MCF 10A (cell line): ENCODE measurements at regions of chr6 and their contacts with region 1.

Region 1: GRCh38 chr6:133568970-133569889 is 319.7 kb upstream of the TCF21 start:
- DNase-seq: peak; percentile 97
- H3K4me3 Mint-ChIP-seq: peak overlapping the region; percentile 71
- H3K27ac Mint-ChIP-seq: peak overlapping the region; percentile 93
- H3K4me1 Mint-ChIP-seq: peaks cover 16% of the 10 kb centered on the region
- H3K27me3 Mint-ChIP-seq: no peaks in the 10 kb centered on the region
- CTCF ChIP-seq: peak; percentile 85

Region 2: GRCh38 chr6:133352046-133352445 is 217.2 kb before region 1 on chr6:
- CTCF ChIA-PET with region 1: no interaction called
- POLR2A ChIA-PET with region 1: no interaction called
- intact Hi-C with region 1: no loop called
- DNase-seq: no peak
- H3K4me3 Mint-ChIP-seq: no peak overlapping the region
- H3K27ac Mint-ChIP-seq: no peak overlapping the region
- H3K4me1 Mint-ChIP-seq: no peaks in the 10 kb centered on the region
- H3K27me3 Mint-ChIP-seq: peaks cover 93% of the 10 kb centered on the region
- CTCF ChIP-seq: no peak

Region 3: DNA sequence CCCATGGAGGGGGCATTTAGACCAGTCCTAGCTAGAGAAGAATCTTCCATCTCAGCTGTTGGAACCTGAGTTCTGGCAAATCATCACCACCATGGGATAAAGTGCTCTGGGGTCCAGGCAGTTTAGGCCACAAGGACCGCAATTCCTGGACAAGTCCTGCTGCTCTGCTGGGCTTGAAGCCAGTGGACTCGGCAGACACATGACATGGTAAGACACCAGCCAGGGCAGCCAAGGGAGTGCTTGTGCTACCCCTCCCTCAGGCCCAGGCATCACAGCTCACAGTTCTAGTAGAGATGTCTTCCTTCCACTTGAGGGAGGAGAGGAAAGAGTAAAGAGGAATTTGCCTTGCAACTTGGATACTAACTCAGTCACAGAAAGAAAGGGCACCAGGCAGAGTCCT is 82.1 kb before region 1 on chr6:
- CTCF ChIA-PET with region 1: no interaction called
- POLR2A ChIA-PET with region 1: no interaction called
- intact Hi-C with region 1: no loop called
- DNase-seq: no peak
- H3K4me3 Mint-ChIP-seq: no peak overlapping the region
- H3K27ac Mint-ChIP-seq: no peak overlapping the region
- H3K4me1 Mint-ChIP-seq: no peaks in the 10 kb centered on the region
- H3K27me3 Mint-ChIP-seq: peaks cover 86% of the 10 kb centered on the region
- CTCF ChIP-seq: no peak

Region 4: DNA sequence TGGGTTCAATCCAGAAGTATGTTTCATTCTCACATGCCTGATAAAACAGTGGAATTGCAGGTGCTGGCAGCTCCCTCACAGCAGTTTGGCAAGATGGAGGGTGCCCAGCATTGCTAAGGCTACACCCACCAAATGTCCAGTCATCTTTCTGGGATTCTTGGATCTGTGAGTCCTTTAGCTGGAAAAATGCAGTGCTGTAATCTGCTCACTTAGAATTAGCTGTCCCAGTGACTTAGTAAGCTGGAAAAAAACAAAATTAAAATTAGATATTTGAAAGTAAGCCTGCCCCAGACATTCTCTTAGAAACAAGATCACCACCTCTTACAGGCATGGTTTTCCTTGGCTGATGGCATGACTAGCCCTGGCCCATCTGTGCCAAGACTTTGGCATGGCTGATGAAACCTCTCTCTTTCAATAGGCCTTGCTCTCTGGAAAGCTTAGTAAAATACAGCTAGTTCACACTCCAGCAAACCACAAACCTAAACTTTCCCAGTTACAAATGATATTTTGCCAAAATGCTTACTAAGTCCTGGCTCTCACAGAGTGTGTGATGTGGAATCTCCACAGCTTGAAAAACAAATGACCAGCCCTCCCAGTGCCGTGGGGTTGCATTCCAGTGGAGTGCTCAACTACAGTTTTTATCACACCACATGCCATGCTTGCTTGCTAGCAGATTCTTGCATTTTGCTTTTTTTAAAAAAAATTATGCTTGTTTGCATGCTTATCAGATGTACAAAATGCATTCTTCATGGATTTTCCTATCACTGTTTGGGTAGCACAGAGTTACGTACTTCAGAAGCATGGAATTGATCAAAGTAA is 66.6 kb before region 1 on chr6:
- CTCF ChIA-PET with region 1: no interaction called
- POLR2A ChIA-PET with region 1: no interaction called
- intact Hi-C with region 1: no loop called
- DNase-seq: no peak
- H3K4me3 Mint-ChIP-seq: no peak overlapping the region
- H3K27ac Mint-ChIP-seq: no peak overlapping the region
- H3K4me1 Mint-ChIP-seq: no peaks in the 10 kb centered on the region
- H3K27me3 Mint-ChIP-seq: peaks cover 91% of the 10 kb centered on the region
- CTCF ChIP-seq: no peak

Region 5: GRCh38 chr6:133609404-133610270 is 40.4 kb after region 1 on chr6:
- CTCF ChIA-PET with region 1: interaction called, 7 read pairs
- POLR2A ChIA-PET with region 1: interaction called, 3 read pairs
- intact Hi-C with region 1: loop called (anchors 1 kb)
- DNase-seq: peak; percentile 100
- H3K4me3 Mint-ChIP-seq: no peak overlapping the region
- H3K27ac Mint-ChIP-seq: no peak overlapping the region
- H3K4me1 Mint-ChIP-seq: no peaks in the 10 kb centered on the region
- H3K27me3 Mint-ChIP-seq: no peaks in the 10 kb centered on the region
- CTCF ChIP-seq: no peak

Region 6: DNA sequence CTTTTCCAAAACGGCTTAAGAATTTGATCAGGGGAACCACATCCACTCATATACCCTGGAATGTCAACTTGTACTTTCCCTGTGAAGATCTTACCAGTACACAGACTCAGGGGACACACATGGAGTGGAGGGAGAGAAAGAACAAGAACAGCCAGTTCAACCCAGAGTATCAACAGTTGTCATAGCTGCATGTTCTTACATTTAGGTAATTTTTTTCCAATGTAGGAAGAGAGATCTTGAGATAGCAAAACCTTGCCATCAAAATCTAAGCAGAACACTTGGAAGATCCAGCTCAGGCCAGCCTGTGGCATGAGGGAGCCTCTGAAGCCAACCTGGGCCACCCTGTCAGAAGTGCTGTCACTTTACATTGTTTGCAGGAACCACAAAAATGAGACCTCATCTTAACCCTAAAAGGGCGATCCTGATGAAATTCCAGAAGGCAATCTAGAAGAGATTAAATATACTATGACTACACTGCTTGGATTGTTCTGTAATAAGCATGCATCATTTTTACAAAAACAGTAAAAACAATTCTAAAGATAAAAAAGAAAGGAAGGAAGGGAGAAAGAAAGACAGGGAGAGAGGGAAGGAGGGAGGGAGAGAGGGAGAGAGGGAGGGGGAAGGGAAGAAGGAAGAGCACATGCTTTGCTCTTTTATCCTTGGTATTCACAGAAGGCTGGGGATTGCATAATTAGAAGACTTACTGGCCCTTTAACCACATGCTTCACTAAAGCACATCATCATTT is 195.0 kb after region 1 on chr6:
- CTCF ChIA-PET with region 1: interaction called, 3 read pairs
- POLR2A ChIA-PET with region 1: no interaction called
- intact Hi-C with region 1: loop called (anchors 5 kb)
- DNase-seq: no peak
- H3K4me3 Mint-ChIP-seq: no peak overlapping the region
- H3K27ac Mint-ChIP-seq: no peak overlapping the region
- H3K4me1 Mint-ChIP-seq: peaks cover 16% of the 10 kb centered on the region
- H3K27me3 Mint-ChIP-seq: no peaks in the 10 kb centered on the region
- CTCF ChIP-seq: no peak

Region 7: GRCh38 chr6:133886104-133886775 is 317.0 kb after region 1 on chr6:
- CTCF ChIA-PET with region 1: interaction called, 10 read pairs
- POLR2A ChIA-PET with region 1: interaction called, 5 read pairs
- intact Hi-C with region 1: no loop called
- DNase-seq: no peak
- H3K4me3 Mint-ChIP-seq: no peak overlapping the region
- H3K27ac Mint-ChIP-seq: no peak overlapping the region
- H3K4me1 Mint-ChIP-seq: peaks cover 13% of the 10 kb centered on the region
- H3K27me3 Mint-ChIP-seq: no peaks in the 10 kb centered on the region
- CTCF ChIP-seq: no peak

Region 8: GRCh38 chr6:133916650-133917151 is 347.5 kb after region 1 on chr6:
- CTCF ChIA-PET with region 1: interaction called, 236 read pairs
- POLR2A ChIA-PET with region 1: interaction called, 32 read pairs
- intact Hi-C with region 1: loop called (anchors 1 kb)
- DNase-seq: peak; percentile 89
- H3K4me3 Mint-ChIP-seq: no peak overlapping the region
- H3K27ac Mint-ChIP-seq: no peak overlapping the region
- H3K4me1 Mint-ChIP-seq: peaks cover 14% of the 10 kb centered on the region
- H3K27me3 Mint-ChIP-seq: no peaks in the 10 kb centered on the region
- CTCF ChIP-seq: peak; percentile 87